HCT116 (cell line): ENCODE measurements at regions of chr1 and their contacts with region 1.

Region 1: DNA sequence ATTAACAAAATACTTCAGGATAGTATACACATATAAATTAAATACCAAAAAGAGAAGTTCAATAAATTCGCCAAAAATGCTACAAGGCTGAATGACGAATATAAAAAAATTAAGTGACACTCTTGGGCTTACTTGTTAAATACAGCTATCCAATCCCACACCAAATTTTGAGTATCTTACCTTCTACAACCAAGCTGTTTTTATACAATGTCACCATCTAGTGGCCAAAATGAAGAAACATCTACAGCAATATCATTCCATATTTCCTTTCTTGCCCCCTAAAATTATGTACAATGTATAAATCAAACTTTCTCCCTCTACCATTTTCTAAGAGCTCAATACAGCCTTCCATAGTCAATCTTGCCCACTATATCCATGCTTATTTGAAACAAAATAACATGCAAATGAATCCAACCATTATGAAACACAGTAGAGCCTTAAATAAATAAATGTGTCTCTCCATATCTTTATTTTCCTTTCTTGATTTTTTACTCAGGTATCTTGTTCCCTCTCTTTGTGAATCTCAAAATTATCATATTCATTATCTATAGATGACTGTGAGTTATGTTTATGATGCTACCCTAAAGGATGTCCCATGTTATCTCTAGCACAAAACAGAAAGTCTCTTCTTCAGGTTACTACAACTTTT is 86.3 kb downstream of the ACBD6 start:
- DNase-seq: peak; percentile 27
- ATAC-seq: peak; percentile 57; the same call in 1 of the 2 replicates
- H3K4me3 ChIP-seq: no peak overlapping the region
- H3K27ac ChIP-seq: no peak overlapping the region
- H3K4me1 ChIP-seq: no peaks in the 10 kb centered on the region
- H3K27me3 ChIP-seq: no peaks in the 10 kb centered on the region
- CTCF ChIP-seq: peak; percentile 54 to 82 (median 54); a peak in 5 of 6 replicates
- POLR2A ChIP-seq: no peak
- RAD21 ChIP-seq: peak; percentile 66

Region 2: DNA sequence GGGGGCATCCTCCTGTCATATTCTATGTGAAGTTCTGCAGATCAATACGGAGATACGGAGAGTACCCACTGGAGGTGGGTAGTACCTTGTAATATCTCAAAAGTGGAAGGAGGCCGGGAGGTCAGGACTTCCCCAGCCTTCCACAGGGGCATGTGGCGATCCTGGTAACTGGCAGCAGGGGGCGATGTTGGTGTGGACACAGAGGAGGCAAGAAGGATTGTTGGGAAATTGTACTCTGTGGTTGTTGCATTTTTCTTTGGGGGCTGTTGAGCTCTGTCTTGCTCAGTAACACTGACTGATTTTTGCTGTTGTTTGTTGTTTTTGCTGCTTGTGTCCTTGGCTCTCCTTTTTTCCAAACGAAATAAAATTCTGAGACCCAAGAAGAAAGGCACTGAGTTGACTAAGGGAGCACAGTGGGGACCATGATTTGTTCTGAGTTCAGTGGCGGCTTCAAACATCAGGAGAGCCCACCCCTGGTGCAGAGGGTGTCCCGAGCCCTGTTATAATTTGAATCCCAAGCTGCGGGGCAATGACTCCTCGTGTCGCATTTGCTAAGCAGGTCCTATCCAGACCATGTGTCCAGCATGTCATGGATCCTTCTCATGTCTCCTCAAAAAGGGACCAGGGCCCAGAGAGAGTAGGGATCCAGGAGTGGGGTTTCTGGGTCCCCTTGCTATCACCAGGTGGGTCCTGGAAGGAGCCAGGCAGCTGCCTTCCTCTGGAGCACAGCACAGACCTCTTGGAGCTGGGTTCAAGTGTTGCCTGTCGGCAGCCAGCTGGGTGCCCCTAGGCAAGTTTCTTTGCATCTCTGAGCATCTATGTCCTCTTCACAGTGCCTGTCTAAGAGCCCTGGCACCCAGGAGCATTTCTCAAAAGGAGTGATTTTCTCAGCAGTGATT is 163.2 kb before region 1 on chr1:
- CTCF ChIA-PET with region 1: interaction called, 4 read pairs
- POLR2A ChIA-PET with region 1: no interaction called
- RAD21 ChIA-PET with region 1: interaction called in 1 of 2 experiments, 3 read pairs
- intact Hi-C with region 1: loop called (anchors 1 kb)
- DNase-seq: peak; percentile 51
- ATAC-seq: peak; percentile 86
- H3K4me3 ChIP-seq: no peak overlapping the region
- H3K27ac ChIP-seq: no peak overlapping the region
- H3K4me1 ChIP-seq: peaks cover 0 to 4% of the 10 kb centered on the region in 2 experiments; a peak in 1 of 4 replicates
- H3K27me3 ChIP-seq: no peaks in the 10 kb centered on the region
- CTCF ChIP-seq: peak; percentile 88 to 92 (median 92); a peak in 5 of 6 replicates
- POLR2A ChIP-seq: no peak
- RAD21 ChIP-seq: peak; percentile 92